ENCODE measurements at regions of chr21 and their contacts with region 1.

Region 1: DNA sequence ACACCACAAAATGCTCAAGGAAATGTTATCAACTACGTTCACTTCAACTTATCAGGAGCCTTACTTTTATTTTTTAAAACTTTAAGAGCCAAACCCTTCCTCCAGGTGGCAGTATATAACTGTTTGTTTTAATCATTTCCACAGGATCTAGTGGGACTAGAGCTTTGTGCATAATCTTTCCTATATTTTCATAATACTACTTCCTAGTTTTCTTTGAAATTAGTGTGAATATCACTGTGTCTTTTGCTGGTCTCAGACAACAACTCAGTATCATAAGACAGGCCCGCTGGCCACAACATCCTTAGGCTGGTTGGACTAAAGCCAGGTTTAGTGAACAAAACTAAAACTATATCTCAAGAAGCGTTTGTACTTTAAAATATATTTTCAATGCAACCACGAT is 145.5 kb downstream of the TIAM1 start:
- DNase-seq: no peak
- ATAC-seq: peak; percentile 47
- H3K4me3 Mint-ChIP-seq: no peak overlapping the region
- H3K27ac Mint-ChIP-seq: no peak overlapping the region
- H3K4me1 Mint-ChIP-seq: peaks cover 50% of the 10 kb centered on the region
- H3K27me3 Mint-ChIP-seq: no peaks in the 10 kb centered on the region

Region 2: GRCh38 chr21:30839304-30839703 is 359.3 kb before region 1 on chr21:
- CTCF ChIA-PET with region 1: no interaction called
- POLR2A ChIA-PET with region 1: no interaction called
- intact Hi-C with region 1: no loop called
- DNase-seq: peak; percentile 72
- ATAC-seq: peak; percentile 92
- H3K4me3 Mint-ChIP-seq: no peak overlapping the region
- H3K27ac Mint-ChIP-seq: no peak overlapping the region
- H3K4me1 Mint-ChIP-seq: no peaks in the 10 kb centered on the region
- H3K27me3 Mint-ChIP-seq: peaks cover 12% of the 10 kb centered on the region

Region 3: DNA sequence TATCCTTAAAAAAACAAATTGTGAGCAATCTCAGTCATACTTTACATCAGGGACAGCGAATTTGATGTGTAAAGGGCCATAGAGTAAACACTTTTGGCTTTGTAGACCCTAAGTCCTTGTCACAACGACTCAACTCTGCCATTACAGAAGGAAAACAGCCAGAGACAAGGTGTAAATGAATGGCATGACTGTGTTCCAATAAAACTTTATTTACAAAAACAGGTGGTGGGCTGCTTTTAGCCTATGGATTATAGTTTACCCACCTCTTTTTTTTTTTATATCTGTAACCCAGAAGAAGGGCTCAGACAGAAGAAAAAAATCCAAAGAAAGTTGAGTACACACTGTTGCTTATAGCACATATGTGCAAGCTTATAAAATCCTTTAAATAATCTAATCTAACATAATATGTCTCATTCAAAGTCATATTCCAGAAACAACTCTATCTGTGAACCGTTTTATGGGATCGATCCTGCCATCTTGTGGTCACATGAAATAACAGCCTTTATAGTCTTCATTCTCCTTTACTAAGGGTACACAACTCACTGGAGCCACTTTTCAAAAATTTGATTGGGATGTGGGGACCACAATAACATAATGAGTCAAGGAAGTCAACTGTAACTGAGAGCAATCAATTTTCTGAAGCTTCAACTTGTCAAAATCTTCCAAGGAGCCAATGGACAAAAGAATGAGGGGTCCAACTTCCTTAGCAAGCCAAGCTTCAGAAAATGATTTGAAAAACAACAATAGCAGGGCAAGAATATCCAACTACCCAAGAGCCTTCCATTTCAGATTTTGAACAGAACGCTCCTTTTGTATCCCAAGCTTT is 18.1 kb before region 1 on chr21:
- CTCF ChIA-PET with region 1: interaction called, 33 read pairs
- POLR2A ChIA-PET with region 1: interaction called, 8 read pairs
- intact Hi-C with region 1: loop called (anchors 1 to 2 kb)
- DNase-seq: peak; percentile 48
- ATAC-seq: no peak
- H3K4me3 Mint-ChIP-seq: peak overlapping the region; percentile 91
- H3K27ac Mint-ChIP-seq: peak overlapping the region; percentile 99
- H3K4me1 Mint-ChIP-seq: peaks cover 77% of the 10 kb centered on the region
- H3K27me3 Mint-ChIP-seq: no peaks in the 10 kb centered on the region

Region 4: GRCh38 chr21:31326522-31327242 is 128.1 kb after region 1 on chr21:
- CTCF ChIA-PET with region 1: interaction called, 4 read pairs
- POLR2A ChIA-PET with region 1: interaction called, 3 read pairs
- intact Hi-C with region 1: loop called (anchors 2 to 5 kb)
- DNase-seq: peak; percentile 80
- ATAC-seq: peak; percentile 93
- H3K4me3 Mint-ChIP-seq: peak overlapping the region; percentile 28
- H3K27ac Mint-ChIP-seq: peak overlapping the region; percentile 89
- H3K4me1 Mint-ChIP-seq: peaks cover 32% of the 10 kb centered on the region
- H3K27me3 Mint-ChIP-seq: no peaks in the 10 kb centered on the region

Region 5: DNA sequence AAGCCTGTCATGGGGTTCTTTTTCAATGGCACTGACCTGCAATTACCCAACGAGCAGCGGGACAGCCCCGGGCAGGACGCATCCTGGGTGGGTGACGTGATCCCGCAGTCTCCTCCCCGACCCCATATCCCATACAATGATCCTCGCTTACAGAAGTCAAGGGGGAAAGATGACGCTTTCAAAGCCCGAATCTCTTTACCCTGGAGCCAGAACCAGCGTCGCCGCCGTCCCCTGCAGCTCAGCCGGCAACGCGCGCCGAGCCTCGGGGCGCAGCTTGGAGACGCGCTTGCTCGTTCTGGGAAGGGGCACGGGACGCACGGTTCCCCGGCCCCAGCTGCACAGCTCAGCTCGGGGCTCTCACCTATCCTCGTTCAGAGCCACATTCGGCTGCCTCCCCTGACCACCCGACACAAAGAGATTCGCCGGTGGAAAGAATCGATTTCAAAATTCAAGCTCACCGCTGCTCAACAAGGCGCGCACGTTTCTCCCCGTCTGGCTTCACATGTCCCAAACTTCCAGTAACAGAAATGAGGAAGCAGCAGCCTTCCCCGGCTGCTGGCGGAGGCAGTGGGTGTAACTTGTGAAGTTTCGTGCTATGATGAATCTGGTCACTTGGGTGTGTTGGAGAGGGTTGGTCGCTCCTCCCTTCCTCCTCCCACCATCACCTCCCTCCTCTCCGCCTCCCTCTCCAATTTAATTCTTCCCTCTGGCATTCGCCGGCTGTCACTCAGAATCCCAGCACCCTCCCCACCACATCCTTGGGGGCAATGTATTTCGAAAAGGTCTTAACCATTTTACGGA is 145.3 kb after region 1 on chr21 and contains the start of gene TIAM1:
- CTCF ChIA-PET with region 1: interaction called, 8 read pairs
- POLR2A ChIA-PET with region 1: no interaction called
- intact Hi-C with region 1: loop called (anchors 1 to 2 kb)
- DNase-seq: peak; percentile 61
- ATAC-seq: peak; percentile 36
- H3K4me3 Mint-ChIP-seq: peak within 1 kb of the TSS; percentile 85
- H3K27ac Mint-ChIP-seq: peak within 1 kb of the TSS; percentile 93
- H3K4me1 Mint-ChIP-seq: peaks cover 56% of the 10 kb centered on the region
- H3K27me3 Mint-ChIP-seq: peaks cover 5% of the 10 kb centered on the region
- total RNA-seq, gene TIAM1: 60.7 to 72.6 TPM

Region 6: DNA sequence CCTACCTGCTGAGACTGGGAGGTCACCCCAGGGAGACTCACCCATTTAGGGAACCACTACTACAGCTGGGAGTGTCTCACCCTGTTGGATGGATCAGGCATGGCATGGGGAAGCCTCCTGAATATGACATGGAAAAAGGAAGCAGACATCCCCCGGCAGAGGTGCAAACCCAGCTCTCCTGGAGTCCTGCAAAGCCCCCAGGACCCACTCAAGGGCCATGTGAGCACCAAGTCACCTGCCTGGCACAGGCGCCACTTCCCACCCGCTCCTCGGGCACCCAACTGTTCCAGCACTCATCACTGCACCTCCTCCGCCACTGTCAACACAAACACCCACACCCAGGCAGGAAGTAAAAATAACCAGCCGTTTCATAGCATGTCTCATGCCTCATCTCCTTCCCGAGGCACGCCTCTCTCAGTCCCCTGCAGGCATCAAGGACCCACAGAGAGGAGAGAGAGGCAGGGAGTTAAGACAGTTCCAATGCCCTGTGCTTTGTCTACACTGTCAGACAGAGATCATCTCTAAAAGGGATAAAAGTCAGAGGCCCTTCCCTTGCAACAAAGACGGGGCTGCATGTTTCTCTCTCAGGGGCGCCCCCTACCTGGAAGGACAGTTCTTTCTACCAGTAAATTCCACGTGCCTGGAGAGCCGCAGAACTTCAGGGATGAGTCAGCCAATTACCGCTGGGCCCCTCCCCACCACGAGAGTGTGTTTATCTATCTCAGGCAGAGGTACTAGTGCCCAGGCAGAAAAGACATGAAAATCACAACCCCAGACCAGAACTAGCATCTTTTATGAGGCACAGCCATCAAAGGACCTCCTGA is 310.8 kb after region 1 on chr21:
- CTCF ChIA-PET with region 1: no interaction called
- POLR2A ChIA-PET with region 1: no interaction called
- intact Hi-C with region 1: loop called (anchors 2 to 5 kb)
- DNase-seq: peak; percentile 93
- ATAC-seq: peak; percentile 91
- H3K4me3 Mint-ChIP-seq: peak overlapping the region; percentile 49
- H3K27ac Mint-ChIP-seq: peak overlapping the region; percentile 78
- H3K4me1 Mint-ChIP-seq: peaks cover 34% of the 10 kb centered on the region
- H3K27me3 Mint-ChIP-seq: peaks cover 2% of the 10 kb centered on the region

Region 7: GRCh38 chr21:31580866-31581276 is 382.3 kb after region 1 on chr21:
- CTCF ChIA-PET with region 1: interaction called, 29 read pairs
- POLR2A ChIA-PET with region 1: interaction called, 3 read pairs
- intact Hi-C with region 1: loop called (anchors 1 kb)
- DNase-seq: peak; percentile 87
- ATAC-seq: peak; percentile 85
- H3K4me3 Mint-ChIP-seq: no peak overlapping the region
- H3K27ac Mint-ChIP-seq: no peak overlapping the region
- H3K4me1 Mint-ChIP-seq: no peaks in the 10 kb centered on the region
- H3K27me3 Mint-ChIP-seq: peaks cover 3% of the 10 kb centered on the region

Region 8: GRCh38 chr21:31659536-31660258 is 461.1 kb after region 1 on chr21 and contains the start of gene SOD1:
- CTCF ChIA-PET with region 1: no interaction called
- POLR2A ChIA-PET with region 1: no interaction called
- intact Hi-C with region 1: loop called in 1 of 2 experiments (anchors 5 kb)
- DNase-seq: peak; percentile 97
- ATAC-seq: peak; percentile 93
- H3K4me3 Mint-ChIP-seq: peak within 1 kb of the TSS; percentile 88
- H3K27ac Mint-ChIP-seq: peak within 1 kb of the TSS; percentile 99
- H3K4me1 Mint-ChIP-seq: peaks cover 68% of the 10 kb centered on the region
- H3K27me3 Mint-ChIP-seq: no peaks in the 10 kb centered on the region
- total RNA-seq, gene SOD1: 232 to 284 TPM

Measured in activated CD4-positive, alpha-beta T cell treated with anti-CD3 and anti-CD28 coated beads for 36 hours (primary cell).